CD8-positive, alpha-beta T cell (primary cell): ENCODE measurements at regions of chr3 and their contacts with region 1.

Region 1: GRCh38 chr3:112693186-112693585 is 52.2 kb upstream of the CCDC80 start:
- DNase-seq: no peak
- ATAC-seq: no peak
- H3K4me3 ChIP-seq: no peak overlapping the region
- H3K4me3 Mint-ChIP-seq: no peak overlapping the region
- H3K27ac ChIP-seq: no peak overlapping the region
- H3K27ac Mint-ChIP-seq: no peak overlapping the region
- H3K4me1 ChIP-seq: no peaks in the 10 kb centered on the region
- H3K4me1 Mint-ChIP-seq: peaks cover 10% of the 10 kb centered on the region
- H3K27me3 ChIP-seq: no peaks in the 10 kb centered on the region
- H3K27me3 Mint-ChIP-seq: no peaks in the 10 kb centered on the region
- CTCF ChIP-seq: no peak

Region 2: DNA sequence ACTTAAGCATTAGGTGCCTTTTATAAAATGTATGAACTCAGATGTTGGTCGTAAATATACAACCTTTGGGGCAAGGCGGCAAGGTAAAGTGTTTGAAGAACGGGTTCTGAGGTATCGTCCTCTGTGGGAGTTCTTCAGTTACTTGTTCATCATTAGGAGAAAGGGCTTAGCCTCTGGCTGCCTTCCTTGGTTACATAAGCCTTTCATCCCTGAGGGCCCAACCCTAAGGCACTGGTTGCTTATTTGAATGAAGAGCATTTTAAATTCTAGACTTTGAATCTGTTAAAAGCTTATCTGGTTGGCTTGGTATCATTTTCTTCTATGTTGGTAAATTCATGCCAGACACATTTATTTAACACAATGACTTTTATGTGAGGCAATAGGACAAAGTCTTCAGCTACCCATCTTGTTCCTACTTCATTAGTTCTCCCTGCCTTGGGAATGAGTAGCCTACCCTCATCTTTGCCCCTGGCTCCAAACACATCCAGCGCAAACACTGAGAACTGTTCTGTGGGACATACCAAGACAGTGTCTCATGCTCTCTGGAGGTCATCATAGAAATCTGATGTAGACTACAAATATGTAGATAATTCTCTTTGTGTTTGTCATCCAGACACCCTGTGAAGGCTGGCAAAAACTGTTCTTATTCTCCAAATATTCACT is 39.8 kb before region 1 on chr3:
- CTCF ChIA-PET with region 1: no interaction called
- POLR2A ChIA-PET with region 1: no interaction called
- intact Hi-C with region 1: no loop called
- DNase-seq: no peak
- ATAC-seq: no peak
- H3K4me3 ChIP-seq: no peak overlapping the region
- H3K4me3 Mint-ChIP-seq: no peak overlapping the region
- H3K27ac ChIP-seq: no peak overlapping the region
- H3K27ac Mint-ChIP-seq: no peak overlapping the region
- H3K4me1 ChIP-seq: no peaks in the 10 kb centered on the region
- H3K4me1 Mint-ChIP-seq: no peaks in the 10 kb centered on the region
- H3K27me3 ChIP-seq: no peaks in the 10 kb centered on the region
- H3K27me3 Mint-ChIP-seq: no peaks in the 10 kb centered on the region
- CTCF ChIP-seq: no peak

Region 3: DNA sequence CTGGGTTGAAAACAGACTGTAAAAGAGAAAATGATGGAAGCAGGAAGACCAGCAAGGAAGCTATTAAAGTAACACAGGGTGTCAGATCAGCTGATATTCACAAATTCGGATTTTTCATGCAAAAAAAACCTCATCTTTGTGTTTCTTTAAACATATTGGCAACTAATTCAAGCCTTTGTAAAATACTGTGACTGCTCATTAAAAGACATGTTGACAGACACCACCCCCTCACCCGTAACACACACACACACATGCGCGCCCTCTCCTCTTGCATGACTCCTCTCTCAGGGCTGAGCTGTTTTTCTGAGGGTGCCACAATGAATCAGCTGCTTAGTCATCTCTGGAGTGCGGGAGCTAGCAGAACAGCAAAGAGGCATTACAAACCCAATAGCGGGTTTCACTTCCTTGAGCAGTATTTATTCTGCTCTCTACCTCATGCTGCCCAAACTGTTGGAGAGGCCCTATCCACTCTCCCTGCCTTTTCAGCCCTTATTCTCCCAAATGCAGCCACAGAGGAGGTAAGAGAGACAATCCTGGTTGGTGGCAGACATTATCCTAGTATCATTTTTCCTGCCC is 16.4 kb before region 1 on chr3:
- CTCF ChIA-PET with region 1: interaction called, 3 read pairs
- POLR2A ChIA-PET with region 1: interaction called, 4 read pairs
- intact Hi-C with region 1: loop called in 1 of 2 experiments (anchors 2 kb)
- DNase-seq: peak; percentile 21 to 80 (median 69)
- ATAC-seq: peak; percentile 86
- H3K4me3 ChIP-seq: no peak overlapping the region
- H3K4me3 Mint-ChIP-seq: peak overlapping the region; percentile 27
- H3K27ac ChIP-seq: no peak overlapping the region
- H3K27ac Mint-ChIP-seq: peak overlapping the region; percentile 62
- H3K4me1 ChIP-seq: peaks cover 18% of the 10 kb centered on the region
- H3K4me1 Mint-ChIP-seq: peaks cover 41% of the 10 kb centered on the region
- H3K27me3 ChIP-seq: no peaks in the 10 kb centered on the region
- H3K27me3 Mint-ChIP-seq: peaks cover 3% of the 10 kb centered on the region
- CTCF ChIP-seq: no peak